Activated T-helper 1 cell treated with anti-CD3 and anti-CD28 coated beads, Interleukin-12 subunit alpha, Interleukin-12 subunit beta, Interleukin-2, Interleukin-4 antibody, amounts not matched to agents 30 ng/mL and 10 ng/mL and 1 ng/mL, durations not matched to agents 14 hours and 24 hours and 36 hours (primary cell): ENCODE measurements at regions of chr2 and their contacts with region 1.

Region 1: GRCh38 chr2:37635504-37636380 is 35.7 kb downstream of the CDC42EP3 start:
- DNase-seq: peak; percentile 63
- H3K4me3 Mint-ChIP-seq: peak overlapping the region; percentile 34
- H3K27ac Mint-ChIP-seq: peak overlapping the region; percentile 86
- H3K4me1 Mint-ChIP-seq: peaks cover 37% of the 10 kb centered on the region
- H3K27me3 Mint-ChIP-seq: peaks cover 18% of the 10 kb centered on the region

Region 2: GRCh38 chr2:37376421-37377186 is 259.1 kb before region 1 on chr2:
- intact Hi-C with region 1: loop called (anchors 1 kb)
- DNase-seq: peak; percentile 29
- H3K4me3 Mint-ChIP-seq: peak overlapping the region; percentile 34
- H3K27ac Mint-ChIP-seq: peak overlapping the region; percentile 88
- H3K4me1 Mint-ChIP-seq: peaks cover 51% of the 10 kb centered on the region
- H3K27me3 Mint-ChIP-seq: peaks cover 51% of the 10 kb centered on the region

Region 3: GRCh38 chr2:37573451-37574388 is 62.0 kb before region 1 on chr2:
- intact Hi-C with region 1: no loop called
- DNase-seq: no peak
- H3K4me3 Mint-ChIP-seq: no peak overlapping the region
- H3K27ac Mint-ChIP-seq: no peak overlapping the region
- H3K4me1 Mint-ChIP-seq: peaks cover 9% of the 10 kb centered on the region
- H3K27me3 Mint-ChIP-seq: peaks cover 6% of the 10 kb centered on the region

Region 4: DNA sequence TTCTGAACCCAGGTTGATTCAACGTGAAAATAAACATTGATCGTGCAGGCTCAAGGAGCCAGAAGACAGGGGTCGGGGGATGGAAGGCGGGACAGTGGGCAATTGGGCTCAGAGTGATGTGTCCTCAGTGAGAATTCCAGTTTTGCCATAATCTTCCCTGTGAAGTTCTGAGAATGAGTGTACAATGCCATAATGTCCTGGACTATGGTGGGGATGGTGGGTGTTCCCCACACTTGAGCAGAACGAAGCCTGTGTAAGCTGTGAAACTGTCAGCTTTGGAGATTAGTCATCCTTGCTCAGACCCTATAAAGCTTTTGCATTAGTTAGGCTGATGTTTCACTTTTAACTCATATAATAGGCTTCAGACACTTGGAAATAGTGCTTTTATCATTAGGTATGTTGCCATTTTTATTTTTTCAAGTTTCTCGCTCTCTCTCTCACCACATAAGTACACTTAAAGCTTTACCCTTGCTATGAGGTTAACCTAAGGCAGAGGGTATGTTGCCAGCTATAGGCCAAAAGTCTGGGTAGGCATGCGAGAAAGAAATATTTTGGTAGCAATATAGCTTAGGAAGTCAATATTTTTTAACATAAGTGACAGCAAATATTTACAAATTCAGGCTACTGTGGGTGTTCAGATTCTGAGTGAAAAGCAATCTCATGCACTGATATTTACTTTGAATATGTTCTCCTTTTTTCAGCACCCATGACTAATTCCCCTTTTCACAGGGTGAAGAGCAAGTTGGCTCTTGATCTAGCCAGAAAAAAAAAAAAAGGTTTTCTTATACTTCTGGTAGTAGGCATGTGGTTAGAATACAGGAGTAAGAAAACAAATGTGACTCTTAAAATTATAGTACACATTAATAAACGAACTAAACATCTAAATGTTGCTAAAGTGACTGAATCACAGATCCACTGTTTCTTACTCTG is 11.5 kb before region 1 on chr2:
- intact Hi-C with region 1: loop called (anchors 1 kb)
- DNase-seq: no peak
- H3K4me3 Mint-ChIP-seq: peak overlapping the region; percentile 32
- H3K27ac Mint-ChIP-seq: peak overlapping the region; percentile 50
- H3K4me1 Mint-ChIP-seq: peaks cover 41% of the 10 kb centered on the region
- H3K27me3 Mint-ChIP-seq: no peaks in the 10 kb centered on the region

Region 5: GRCh38 chr2:37653805-37654378 is 18.1 kb after region 1 on chr2:
- intact Hi-C with region 1: no loop called
- DNase-seq: no peak
- H3K4me3 Mint-ChIP-seq: peak overlapping the region; percentile 24
- H3K27ac Mint-ChIP-seq: peak overlapping the region; percentile 68
- H3K4me1 Mint-ChIP-seq: peaks cover 74% of the 10 kb centered on the region
- H3K27me3 Mint-ChIP-seq: no peaks in the 10 kb centered on the region

Region 6: DNA sequence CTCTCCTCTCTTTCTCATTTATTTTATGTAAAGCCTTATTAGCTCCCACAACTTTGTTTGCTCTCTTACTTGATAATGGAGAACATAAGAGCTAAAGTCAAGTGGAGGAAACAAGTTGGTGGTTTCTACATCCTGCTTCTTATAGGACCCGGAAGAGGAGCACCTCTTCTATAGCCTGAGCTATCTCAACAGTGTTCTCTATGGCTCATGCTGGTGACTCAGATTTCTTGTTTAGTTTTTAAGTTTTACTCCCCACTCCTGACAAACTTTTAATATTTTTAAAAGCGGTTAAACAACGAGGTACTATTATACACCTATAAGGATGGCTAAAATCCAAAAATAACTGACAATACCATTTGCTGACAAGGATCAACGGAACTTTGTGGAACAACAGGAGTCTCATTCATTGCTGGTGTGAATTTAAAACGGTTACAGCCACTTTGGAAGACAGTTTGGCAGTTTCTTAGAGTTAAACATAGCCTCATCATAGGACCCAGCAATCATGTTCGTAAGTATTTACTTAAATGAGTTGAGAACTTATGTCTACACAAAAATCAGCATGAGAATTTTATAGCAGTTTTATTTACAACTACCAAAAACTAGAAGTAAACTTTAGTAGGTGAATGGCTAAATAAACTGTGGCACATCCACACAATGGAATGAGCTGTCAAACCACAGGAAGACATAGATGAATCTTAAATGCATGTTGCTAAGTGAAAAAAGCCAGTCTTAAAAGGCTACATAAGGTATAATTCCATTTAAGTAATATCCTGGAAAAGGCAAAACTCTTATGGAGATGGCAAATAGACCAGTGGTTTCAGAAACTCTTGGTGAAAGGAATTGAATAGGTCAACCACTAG is 48.4 kb after region 1 on chr2:
- intact Hi-C with region 1: loop called (anchors 1 kb)
- DNase-seq: no peak
- H3K4me3 Mint-ChIP-seq: peak overlapping the region; percentile 34
- H3K27ac Mint-ChIP-seq: peak overlapping the region; percentile 85
- H3K4me1 Mint-ChIP-seq: peaks cover 27% of the 10 kb centered on the region
- H3K27me3 Mint-ChIP-seq: no peaks in the 10 kb centered on the region

Region 7: GRCh38 chr2:37832590-37833197 is 197.0 kb after region 1 on chr2:
- intact Hi-C with region 1: loop called (anchors 5 kb)
- DNase-seq: peak; percentile 60
- H3K4me3 Mint-ChIP-seq: no peak overlapping the region
- H3K27ac Mint-ChIP-seq: no peak overlapping the region
- H3K4me1 Mint-ChIP-seq: peaks cover 14% of the 10 kb centered on the region
- H3K27me3 Mint-ChIP-seq: no peaks in the 10 kb centered on the region

Region 8: GRCh38 chr2:38653715-38654527 is 1018.2 kb after region 1 on chr2:
- intact Hi-C with region 1: loop called (anchors 5 kb)
- DNase-seq: peak; percentile 30
- H3K4me3 Mint-ChIP-seq: peak overlapping the region; percentile 68
- H3K27ac Mint-ChIP-seq: peak overlapping the region; percentile 90
- H3K4me1 Mint-ChIP-seq: peaks cover 80% of the 10 kb centered on the region
- H3K27me3 Mint-ChIP-seq: no peaks in the 10 kb centered on the region